Activated T-helper 1 cell treated with anti-CD3 and anti-CD28 coated beads, Interleukin-12 subunit alpha, Interleukin-12 subunit beta, Interleukin-2, Interleukin-4 antibody, amounts not matched to agents 30 ng/mL and 10 ng/mL and 1 ng/mL, durations not matched to agents 14 hours and 24 hours and 36 hours (primary cell): ENCODE measurements at regions of chr16 and their contacts with region 1.

Region 1: GRCh38 chr16:714558-715476 is at the start of gene METRN:
- DNase-seq: peak; percentile 88
- H3K4me3 Mint-ChIP-seq: peak within 1 kb of the TSS; percentile 60
- H3K27ac Mint-ChIP-seq: no peak within 1 kb of the TSS
- H3K4me1 Mint-ChIP-seq: no peaks in the 10 kb centered on the region
- H3K27me3 Mint-ChIP-seq: peaks cover 19% of the 10 kb centered on the region
- total RNA-seq, gene METRN: 21.8 and 29.6 TPM in 2 replicates

Region 2: DNA sequence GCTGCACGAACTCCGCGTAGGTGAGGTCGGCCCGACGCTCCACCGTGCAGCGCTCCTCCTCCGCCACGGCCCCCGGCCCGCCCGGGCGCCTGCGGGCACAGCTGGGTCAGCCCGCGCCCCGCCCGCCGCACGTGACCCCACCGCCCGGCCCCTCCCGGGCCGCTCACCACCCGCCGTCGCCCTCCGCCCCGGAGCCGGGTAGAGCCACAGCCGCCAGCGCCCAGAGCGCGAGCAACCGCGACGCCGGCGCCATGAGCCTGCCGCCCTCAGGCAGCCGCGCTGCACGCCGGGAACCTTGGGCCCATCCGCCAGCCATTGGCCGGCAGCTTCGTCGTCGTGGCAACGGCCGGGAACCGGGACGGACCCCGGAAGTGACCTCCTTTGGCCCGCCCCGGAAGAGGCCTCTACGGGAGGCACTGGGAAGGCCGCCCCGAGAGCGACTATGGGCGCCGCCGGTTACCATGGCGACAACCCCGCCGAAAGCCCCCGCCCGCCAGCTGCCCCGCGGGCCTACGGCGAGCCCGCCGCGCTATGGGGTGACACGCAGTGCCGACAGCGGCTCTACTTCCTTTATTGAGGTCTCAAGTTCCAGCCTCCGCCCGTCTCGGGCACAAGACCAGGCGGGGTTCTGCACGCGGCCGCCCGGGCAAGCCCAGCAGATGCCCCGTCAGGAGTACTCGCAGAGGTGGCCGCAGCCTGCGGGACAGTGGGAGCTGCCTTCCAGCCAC is 30.6 kb before region 1 on chr16 and contains the start of gene JMJD8:
- intact Hi-C with region 1: loop called (anchors 1 kb)
- DNase-seq: peak; percentile 97
- H3K4me3 Mint-ChIP-seq: peak within 1 kb of the TSS; percentile 83
- H3K27ac Mint-ChIP-seq: peak within 1 kb of the TSS; percentile 58
- H3K4me1 Mint-ChIP-seq: peaks cover 5% of the 10 kb centered on the region
- H3K27me3 Mint-ChIP-seq: no peaks in the 10 kb centered on the region
- total RNA-seq, gene JMJD8: 63.4 and 71.4 TPM in 2 replicates

Region 3: DNA sequence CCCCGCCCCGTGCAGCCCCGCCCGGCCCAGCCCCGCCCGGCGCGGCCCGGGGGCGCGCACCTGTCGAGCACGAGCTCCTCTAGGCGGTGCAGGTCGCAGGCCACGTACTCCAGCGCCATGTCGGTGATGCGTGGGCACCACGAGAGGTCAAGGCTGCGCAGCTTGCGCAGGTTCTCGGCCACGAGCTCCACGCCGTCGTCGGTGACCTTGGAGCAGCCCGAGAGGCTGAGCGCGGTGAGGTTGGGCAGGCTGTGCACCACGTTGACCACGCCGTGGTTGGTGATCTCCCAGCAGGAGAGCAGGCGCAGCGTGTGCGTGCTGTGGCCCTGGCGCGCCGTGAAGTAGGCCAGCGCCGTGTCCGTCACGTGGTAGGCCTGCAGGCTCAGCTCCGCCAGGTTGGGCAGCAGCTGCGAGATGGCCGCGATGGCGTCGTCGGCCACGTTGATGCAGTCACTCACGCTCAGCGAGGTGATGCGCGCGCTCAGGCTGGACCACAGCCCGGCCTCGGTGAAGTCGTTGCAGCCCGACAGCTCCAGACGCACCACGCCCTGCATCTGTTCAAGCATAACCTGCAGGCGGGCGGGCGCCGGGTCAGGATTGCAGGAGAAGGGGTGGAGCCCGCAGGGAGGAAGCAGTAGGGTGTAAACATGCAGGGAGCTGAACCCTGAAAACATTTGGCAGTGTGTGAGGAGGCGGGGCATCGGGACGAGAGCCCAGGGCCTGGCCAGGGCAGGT is 19.3 kb before region 1 on chr16:
- intact Hi-C with region 1: loop called (anchors 2 kb)
- DNase-seq: peak; percentile 66
- H3K4me3 Mint-ChIP-seq: peak overlapping the region; percentile 80
- H3K27ac Mint-ChIP-seq: peak overlapping the region; percentile 74
- H3K4me1 Mint-ChIP-seq: peaks cover 13% of the 10 kb centered on the region
- H3K27me3 Mint-ChIP-seq: peaks cover 13% of the 10 kb centered on the region

Region 4: GRCh38 chr16:777826-778225 is 63.0 kb after region 1 on chr16:
- intact Hi-C with region 1: no loop called
- DNase-seq: no peak
- H3K4me3 Mint-ChIP-seq: no peak overlapping the region
- H3K27ac Mint-ChIP-seq: no peak overlapping the region
- H3K4me1 Mint-ChIP-seq: no peaks in the 10 kb centered on the region
- H3K27me3 Mint-ChIP-seq: no peaks in the 10 kb centered on the region

Region 5: GRCh38 chr16:788394-789126 is 73.7 kb after region 1 on chr16 and contains the start of gene CHTF18:
- intact Hi-C with region 1: loop called (anchors 1 kb)
- DNase-seq: peak; percentile 92
- H3K4me3 Mint-ChIP-seq: peak within 1 kb of the TSS; percentile 92
- H3K27ac Mint-ChIP-seq: peak within 1 kb of the TSS; percentile 79
- H3K4me1 Mint-ChIP-seq: no peaks in the 10 kb centered on the region
- H3K27me3 Mint-ChIP-seq: no peaks in the 10 kb centered on the region
- total RNA-seq, gene CHTF18: 142 and 154 TPM in 2 replicates

Region 6: DNA sequence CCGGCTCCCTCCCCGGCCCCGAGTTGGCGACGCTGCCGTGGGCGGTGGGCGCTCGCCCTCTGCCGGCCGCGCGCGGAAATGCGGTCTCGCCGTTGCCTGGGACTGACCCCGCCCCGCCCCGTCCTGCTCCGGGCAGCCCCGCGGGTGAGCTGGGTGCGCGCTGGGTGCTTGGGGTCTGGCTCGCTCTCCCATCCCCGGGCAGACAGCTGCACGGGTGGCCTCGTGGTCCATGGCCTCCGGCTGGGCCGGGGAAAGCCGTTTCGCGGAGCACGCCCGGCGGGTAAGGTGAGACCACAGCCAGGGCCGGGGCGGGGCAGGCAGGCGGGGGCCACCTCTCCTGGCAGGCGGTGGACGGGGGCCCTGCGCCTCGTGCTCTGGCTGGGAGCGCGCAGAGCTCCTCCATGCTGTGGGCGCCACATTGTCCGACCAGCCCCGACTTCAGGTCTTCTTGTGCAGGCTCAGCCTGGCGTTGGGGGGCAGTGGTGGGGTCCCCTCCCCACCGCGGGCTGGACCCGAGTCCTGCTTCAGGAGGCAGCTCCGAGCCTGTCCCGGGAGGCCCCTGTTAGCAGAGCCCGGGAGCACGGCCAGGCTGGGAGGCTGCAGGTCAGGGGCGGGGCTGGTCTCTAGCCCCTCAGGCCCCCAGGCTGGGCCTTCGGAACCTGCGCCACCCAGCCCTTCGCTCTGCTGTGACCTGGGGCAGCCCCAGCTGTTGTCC is 388.3 kb after region 1 on chr16:
- intact Hi-C with region 1: loop called (anchors 2 kb)
- DNase-seq: peak; percentile 63
- H3K4me3 Mint-ChIP-seq: no peak overlapping the region
- H3K27ac Mint-ChIP-seq: no peak overlapping the region
- H3K4me1 Mint-ChIP-seq: no peaks in the 10 kb centered on the region
- H3K27me3 Mint-ChIP-seq: no peaks in the 10 kb centered on the region